ENCODE measurements at regions of chr19 and their contacts with region 1.

Region 1: GRCh38 chr19:54029930-54030490 is 33.7 kb downstream of the VSTM1 start:
- DNase-seq: peak; percentile 72
- ATAC-seq: peak; percentile 77
- H3K4me3 ChIP-seq: no peak overlapping the region
- H3K27ac ChIP-seq: no peak overlapping the region
- H3K4me1 ChIP-seq: peaks cover 17% of the 10 kb centered on the region
- H3K27me3 ChIP-seq: no peaks in the 10 kb centered on the region; a peak in 2 of 5 replicates
- CTCF ChIP-seq: peak; percentile 79
- EP300 ChIP-seq: no peak
- POLR2A ChIP-seq: no peak
- RAD21 ChIP-seq: no peak

Region 2: DNA sequence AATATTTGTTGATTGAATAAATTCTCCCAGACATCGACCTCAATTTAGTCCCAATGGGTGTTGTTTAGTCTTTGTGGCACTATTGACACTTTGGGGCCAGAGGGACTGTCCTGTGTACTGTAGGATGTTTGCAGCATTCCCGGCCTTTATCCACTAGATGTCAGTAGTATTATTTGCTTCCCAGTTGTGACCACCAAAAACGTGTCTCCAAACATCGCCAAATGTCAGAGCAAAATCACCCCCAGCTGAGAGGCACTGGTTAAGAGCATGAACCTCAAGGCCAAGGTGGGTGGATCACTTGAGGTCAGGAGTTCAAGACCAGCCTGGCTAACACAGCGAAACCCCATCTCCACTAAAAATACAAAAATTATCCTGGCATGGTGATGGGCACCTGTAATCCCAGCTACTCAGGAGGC is 221.3 kb before region 1 on chr19:
- CTCF ChIA-PET with region 1: interaction called, 19 read pairs
- POLR2A ChIA-PET with region 1: no interaction called
- in situ Hi-C with region 1: loop called (anchors 10 kb)
- intact Hi-C with region 1: loop called (anchors 1 kb)
- DNase-seq: peak; percentile 68
- ATAC-seq: peak; percentile 88
- H3K4me3 ChIP-seq: no peak overlapping the region
- H3K27ac ChIP-seq: no peak overlapping the region
- H3K4me1 ChIP-seq: peaks cover 24% of the 10 kb centered on the region
- H3K27me3 ChIP-seq: peaks cover 0 to 1% of the 10 kb centered on the region in 2 experiments; a peak in 1 of 5 replicates
- CTCF ChIP-seq: peak; percentile 84
- EP300 ChIP-seq: no peak
- POLR2A ChIP-seq: no peak
- RAD21 ChIP-seq: peak; percentile 50; the same call in 1 of the 2 replicates

Region 3: GRCh38 chr19:53906211-53907192 is 123.5 kb before region 1 on chr19:
- CTCF ChIA-PET with region 1: interaction called, 13 read pairs
- POLR2A ChIA-PET with region 1: no interaction called
- in situ Hi-C with region 1: loop called (anchors 10 kb)
- intact Hi-C with region 1: no loop called
- DNase-seq: no peak
- ATAC-seq: peak; percentile 69
- H3K4me3 ChIP-seq: no peak overlapping the region
- H3K27ac ChIP-seq: no peak overlapping the region
- H3K4me1 ChIP-seq: no peaks in the 10 kb centered on the region
- H3K27me3 ChIP-seq: peaks cover 13 to 35% of the 10 kb centered on the region in 2 experiments
- CTCF ChIP-seq: peak; percentile 80
- EP300 ChIP-seq: no peak
- POLR2A ChIP-seq: no peak
- RAD21 ChIP-seq: no peak